Mucosa of descending colon (tissue), 3 donors: ENCODE measurements at regions of chr17 and their contacts with region 1.

Region 1: DNA sequence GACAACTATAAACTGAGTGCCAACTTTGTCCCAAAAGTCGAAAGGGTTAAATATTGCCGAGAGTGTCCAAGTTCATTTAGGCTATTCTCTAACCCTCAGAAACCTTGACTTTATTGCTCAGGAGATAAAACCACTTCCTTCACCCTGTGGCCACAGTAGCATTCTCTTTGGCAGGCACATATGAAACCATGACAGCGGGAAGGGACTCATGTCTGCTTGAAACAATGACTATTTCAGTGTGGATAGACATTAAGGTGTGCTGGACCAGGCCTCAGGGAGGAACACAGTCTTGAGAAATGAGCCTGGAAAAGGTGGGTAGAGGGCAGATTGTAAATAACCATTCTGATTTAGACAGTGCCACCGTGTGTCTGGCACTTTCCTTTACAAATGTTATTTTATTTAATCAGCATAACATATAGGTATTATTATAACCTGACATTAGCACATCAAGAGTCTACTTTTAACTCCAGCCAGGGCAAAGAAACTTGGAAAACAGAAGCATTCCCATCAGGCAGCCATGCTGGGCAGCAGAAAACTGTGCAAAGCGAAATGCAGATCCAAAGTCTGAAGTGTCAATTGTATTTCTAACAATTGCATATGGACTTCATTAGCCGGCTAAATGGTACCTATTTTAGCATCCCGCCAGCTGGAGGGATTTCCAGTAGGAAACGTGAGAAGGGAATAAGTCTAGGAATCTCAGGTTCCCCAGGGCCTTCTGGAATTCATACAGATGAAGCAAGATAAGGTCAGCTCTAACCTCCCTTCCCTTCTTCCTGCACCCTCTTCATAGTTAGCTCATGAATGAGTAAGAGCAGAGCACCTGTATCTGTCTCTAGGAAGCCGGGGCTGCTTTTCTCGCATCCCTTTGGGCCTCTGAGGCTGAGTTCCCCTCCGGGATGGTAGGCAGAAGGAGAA is 212.8 kb upstream of the ELAC2 start:
- DNase-seq: no peak
- ATAC-seq: peak; percentile 50
- H3K4me3 ChIP-seq: no peak overlapping the region
- H3K4me1 ChIP-seq: no peaks in the 10 kb centered on the region
- CTCF ChIP-seq: no peak

Region 2: DNA sequence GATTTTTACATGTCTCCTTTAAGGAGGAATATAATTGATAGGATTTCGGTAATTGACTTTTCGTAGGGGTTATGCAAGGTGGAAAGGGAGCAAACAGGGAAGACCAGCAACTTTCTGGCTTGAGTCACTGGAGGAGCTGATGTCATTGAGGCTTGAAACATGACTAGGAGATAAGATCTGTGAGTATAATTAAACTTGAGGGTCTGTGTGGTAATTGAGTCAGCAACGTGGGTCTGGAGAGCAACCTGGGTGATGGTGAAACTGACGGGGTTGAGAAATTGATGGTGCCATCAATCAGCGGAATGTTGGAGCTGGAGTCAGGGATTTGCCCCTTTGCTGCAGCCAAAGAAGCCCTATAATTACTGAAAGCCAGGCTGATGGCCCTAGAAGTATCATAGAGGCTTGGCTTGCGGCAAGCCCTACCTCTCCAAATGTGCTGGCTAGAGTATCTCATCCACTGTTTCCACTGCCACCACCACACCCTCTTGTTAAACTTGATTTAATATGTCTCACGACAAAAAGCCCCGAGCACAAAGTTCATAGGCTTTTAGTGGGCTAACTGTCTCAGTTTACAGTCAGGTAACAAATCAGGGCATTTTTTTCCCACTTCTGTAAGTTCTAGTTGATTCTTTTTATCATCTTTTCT is 25.9 kb before region 1 on chr17:
- intact Hi-C with region 1: loop called in 1 of 2 experiments (anchors 2 kb)
- DNase-seq: peak in 1 of 3 donors; percentile 25
- ATAC-seq: peak; percentile 81
- H3K4me3 ChIP-seq: no peak overlapping the region
- H3K4me1 ChIP-seq: no peaks in the 10 kb centered on the region
- CTCF ChIP-seq: no peak